GM10248 (cell line): ENCODE measurements at regions of chr6 and their contacts with region 1.

Region 1: DNA sequence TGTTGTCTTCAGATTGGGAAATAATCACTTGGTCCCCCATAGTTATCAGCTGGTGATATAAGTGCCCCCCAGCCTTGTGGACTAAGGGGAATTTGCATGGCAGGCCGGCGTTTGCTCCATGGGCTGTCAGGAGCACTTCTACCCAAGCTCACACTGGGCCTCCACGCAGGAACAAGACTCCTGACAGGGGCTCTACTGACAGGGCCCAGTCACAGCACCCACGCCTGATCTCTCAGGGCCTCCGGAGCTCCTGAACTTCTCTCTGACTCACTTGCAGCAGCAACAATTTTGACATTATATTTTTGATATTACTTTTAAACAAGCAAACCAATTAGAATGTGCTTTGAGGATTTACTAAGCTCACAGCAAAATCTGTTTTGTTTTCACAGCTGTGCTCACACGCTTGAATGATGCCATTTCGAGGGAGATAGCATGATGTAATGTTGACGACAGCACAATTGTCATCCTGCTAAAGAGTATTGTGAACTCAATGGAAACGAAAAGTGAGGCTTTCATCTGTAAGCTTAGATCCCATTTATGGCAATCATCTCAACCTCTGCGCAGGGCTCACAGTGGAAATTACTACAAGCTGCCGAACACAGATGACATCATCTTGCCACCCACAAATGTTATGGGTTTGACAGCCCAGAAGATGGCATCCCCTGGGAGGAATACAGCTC is 28.7 kb upstream of the TXNDC5 start:
- DNase-seq: no peak
- CTCF ChIP-seq: no peak

Region 2: GRCh38 chr6:7914991-7915789 is 24.1 kb before region 1 on chr6:
- CTCF ChIA-PET with region 1: interaction called, 17 read pairs
- POLR2A ChIA-PET with region 1: no interaction called
- DNase-seq: no peak
- CTCF ChIP-seq: no peak

Region 3: DNA sequence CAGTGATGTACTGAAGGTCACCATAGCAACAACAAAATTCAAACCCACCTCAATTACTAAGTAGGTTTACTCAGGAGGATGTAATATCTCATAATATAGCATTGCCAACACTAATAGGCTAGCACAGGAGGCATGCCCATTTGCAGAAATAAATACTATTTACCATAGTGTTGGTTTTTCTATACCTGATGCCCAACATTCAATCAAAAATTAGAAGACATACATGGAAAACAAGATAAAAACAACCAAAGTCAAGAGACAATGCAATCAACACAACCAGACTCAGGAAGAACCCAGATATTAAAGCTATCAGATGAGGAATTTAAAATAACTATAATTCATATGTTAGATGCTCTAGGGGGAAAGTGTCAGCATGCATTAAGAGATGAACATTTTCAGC is 14.5 kb before region 1 on chr6:
- CTCF ChIA-PET with region 1: interaction called, 11 read pairs
- POLR2A ChIA-PET with region 1: no interaction called
- DNase-seq: no peak
- CTCF ChIP-seq: no peak

Region 4: GRCh38 chr6:7954477-7955200 is 15.3 kb after region 1 on chr6:
- CTCF ChIA-PET with region 1: interaction called, 10 read pairs
- POLR2A ChIA-PET with region 1: no interaction called
- DNase-seq: no peak
- CTCF ChIP-seq: no peak